ENCODE measurements at regions of chr14 and their contacts with region 1.

Region 1: GRCh38 chr14:70934502-70935134 is 27.4 kb downstream of the PCNX1 start:
- DNase-seq: peak in 2 of 5 donors; percentile 22 to 29
- H3K4me3 ChIP-seq: peak overlapping the region in 1 of 2 donors; percentile 15
- H3K4me3 Mint-ChIP-seq: peak overlapping the region; percentile 57 to 84 (median 78)
- H3K27ac ChIP-seq: peak overlapping the region; percentile 27
- H3K27ac Mint-ChIP-seq: peak overlapping the region; percentile 70 to 92 (median 83)
- H3K4me1 ChIP-seq: peaks cover 54% of the 10 kb centered on the region
- H3K4me1 Mint-ChIP-seq: peaks cover 57 to 93% (median 71%) of the 10 kb centered on the region in 4 donors
- H3K27me3 ChIP-seq: no peaks in the 10 kb centered on the region
- H3K27me3 Mint-ChIP-seq: no peaks in the 10 kb centered on the region

Region 2: DNA sequence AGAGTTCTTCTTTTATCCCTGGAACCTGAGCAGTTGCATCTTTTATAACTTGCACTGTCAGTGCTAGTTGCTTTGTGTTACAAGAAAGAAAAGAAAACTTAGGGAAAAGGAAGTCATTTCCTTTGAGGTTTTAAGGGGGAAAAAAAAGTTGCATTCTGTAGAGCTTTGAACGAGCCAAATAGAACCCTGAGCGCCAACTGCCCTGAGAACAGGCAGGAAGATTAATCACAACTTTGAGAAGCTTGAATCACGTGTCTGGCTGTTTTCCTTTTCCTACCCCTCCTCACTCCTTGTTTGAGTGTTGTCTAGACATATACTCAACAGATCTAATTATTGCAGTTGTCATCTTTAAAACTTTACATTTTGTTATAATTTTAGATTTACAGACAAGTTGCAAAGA is 14.8 kb before region 1 on chr14:
- CTCF ChIA-PET with region 1: interaction called, 6 read pairs
- POLR2A ChIA-PET with region 1: interaction called, 40 read pairs
- intact Hi-C with region 1: loop called (anchors 2 kb)
- DNase-seq: peak in 1 of 5 donors; percentile 64
- H3K4me3 ChIP-seq: no peak overlapping the region
- H3K4me3 Mint-ChIP-seq: peak overlapping the region; percentile 38 to 75 (median 62)
- H3K27ac ChIP-seq: peak overlapping the region; percentile 35
- H3K27ac Mint-ChIP-seq: peak overlapping the region; percentile 54 to 91 (median 78)
- H3K4me1 ChIP-seq: peaks cover 97% of the 10 kb centered on the region
- H3K4me1 Mint-ChIP-seq: peaks cover 67 to 98% (median 84%) of the 10 kb centered on the region in 4 donors
- H3K27me3 ChIP-seq: no peaks in the 10 kb centered on the region
- H3K27me3 Mint-ChIP-seq: no peaks in the 10 kb centered on the region

Region 3: DNA sequence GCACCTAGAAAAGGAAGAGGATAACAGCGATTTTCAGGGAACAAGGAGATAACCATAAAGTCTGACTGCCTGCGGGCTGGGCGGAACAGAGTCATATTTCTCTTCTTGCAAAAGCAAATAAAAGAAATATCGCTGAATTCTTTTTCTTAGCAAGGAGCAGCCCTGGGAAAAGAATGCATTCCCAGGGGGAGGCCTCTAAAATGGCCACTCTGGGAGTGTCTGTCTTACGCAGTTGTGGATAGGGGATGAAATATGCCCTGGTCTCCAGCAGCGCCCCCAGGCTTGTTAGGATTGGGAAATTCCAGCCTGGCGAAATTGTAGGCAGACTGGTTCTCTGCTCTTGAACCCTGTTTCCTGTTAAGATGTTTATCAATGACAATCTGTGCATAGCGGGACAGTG is 13.1 kb after region 1 on chr14:
- CTCF ChIA-PET with region 1: interaction called, 73 read pairs
- POLR2A ChIA-PET with region 1: interaction called, 21 read pairs
- intact Hi-C with region 1: loop called (anchors 2 kb)
- DNase-seq: no peak
- H3K4me3 ChIP-seq: no peak overlapping the region
- H3K4me3 Mint-ChIP-seq: no peak overlapping the region
- H3K27ac ChIP-seq: no peak overlapping the region
- H3K27ac Mint-ChIP-seq: peak overlapping the region in 4 of 7 donors; percentile 59 to 66 (median 60)
- H3K4me1 ChIP-seq: peaks cover 18% of the 10 kb centered on the region
- H3K4me1 Mint-ChIP-seq: peaks cover 26 to 50% (median 38%) of the 10 kb centered on the region in 4 donors
- H3K27me3 ChIP-seq: no peaks in the 10 kb centered on the region
- H3K27me3 Mint-ChIP-seq: no peaks in the 10 kb centered on the region

Region 4: GRCh38 chr14:71103662-71104484 is 169.3 kb after region 1 on chr14:
- CTCF ChIA-PET with region 1: no interaction called
- POLR2A ChIA-PET with region 1: no interaction called
- intact Hi-C with region 1: no loop called
- DNase-seq: peak in 4 of 5 donors; percentile 40 to 50 (median 47)
- H3K4me3 ChIP-seq: no peak overlapping the region
- H3K4me3 Mint-ChIP-seq: no peak overlapping the region
- H3K27ac ChIP-seq: no peak overlapping the region
- H3K27ac Mint-ChIP-seq: peak overlapping the region in 4 of 7 donors; percentile 11 to 22 (median 16)
- H3K4me1 ChIP-seq: peaks cover 8% of the 10 kb centered on the region
- H3K4me1 Mint-ChIP-seq: peaks cover 10 to 24% (median 18%) of the 10 kb centered on the region in 4 donors
- H3K27me3 ChIP-seq: no peaks in the 10 kb centered on the region
- H3K27me3 Mint-ChIP-seq: no peaks in the 10 kb centered on the region

Region 5: DNA sequence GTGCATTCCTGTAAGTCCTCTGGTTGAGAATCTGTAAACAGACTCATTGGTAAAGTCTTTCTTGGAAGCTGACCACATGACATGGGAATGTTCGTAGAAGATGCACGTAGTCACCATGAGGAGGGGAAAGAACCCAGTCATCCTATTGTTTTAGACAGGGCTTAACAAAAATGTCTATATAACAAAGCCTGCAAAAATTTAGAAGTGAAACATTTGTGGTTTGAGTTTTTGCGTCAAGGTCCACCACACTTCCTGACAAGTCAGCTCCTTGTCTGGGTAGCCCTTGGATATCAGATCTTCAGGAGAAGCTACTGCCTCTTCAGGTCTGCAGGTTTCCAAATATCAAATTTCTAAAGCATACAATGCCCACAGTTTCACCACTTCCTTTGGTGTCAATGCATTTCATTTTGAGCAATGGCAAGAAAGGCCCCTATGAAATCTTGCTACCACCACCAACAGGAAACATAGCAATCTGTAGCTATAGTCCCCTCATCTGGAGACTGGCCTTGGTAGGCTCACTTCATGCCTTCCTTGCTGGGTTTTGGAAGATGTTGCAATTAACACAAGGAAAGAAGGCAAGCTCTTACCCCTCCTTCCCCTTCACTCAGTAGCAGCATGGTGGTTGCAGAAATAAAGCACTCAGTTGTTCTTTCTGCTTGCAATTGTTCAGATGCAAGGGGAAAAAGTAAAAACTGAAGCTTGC is 207.9 kb after region 1 on chr14:
- CTCF ChIA-PET with region 1: no interaction called
- POLR2A ChIA-PET with region 1: no interaction called
- intact Hi-C with region 1: no loop called
- DNase-seq: peak; percentile 17 to 54 (median 39)
- H3K4me3 ChIP-seq: no peak overlapping the region
- H3K4me3 Mint-ChIP-seq: peak overlapping the region in 1 of 8 donors; percentile 13
- H3K27ac ChIP-seq: no peak overlapping the region
- H3K27ac Mint-ChIP-seq: peak overlapping the region; percentile 66 to 94 (median 81)
- H3K4me1 ChIP-seq: peaks cover 27% of the 10 kb centered on the region
- H3K4me1 Mint-ChIP-seq: peaks cover 14 to 24% (median 22%) of the 10 kb centered on the region in 4 donors
- H3K27me3 ChIP-seq: no peaks in the 10 kb centered on the region
- H3K27me3 Mint-ChIP-seq: peaks cover 0 to 3% of the 10 kb centered on the region in 2 donors

Measured in CD4-positive, alpha-beta memory T cell (primary cell).